Psoas muscle (tissue), 8 donors: ENCODE measurements at regions of chr2 and their contacts with region 1.

Region 1: DNA sequence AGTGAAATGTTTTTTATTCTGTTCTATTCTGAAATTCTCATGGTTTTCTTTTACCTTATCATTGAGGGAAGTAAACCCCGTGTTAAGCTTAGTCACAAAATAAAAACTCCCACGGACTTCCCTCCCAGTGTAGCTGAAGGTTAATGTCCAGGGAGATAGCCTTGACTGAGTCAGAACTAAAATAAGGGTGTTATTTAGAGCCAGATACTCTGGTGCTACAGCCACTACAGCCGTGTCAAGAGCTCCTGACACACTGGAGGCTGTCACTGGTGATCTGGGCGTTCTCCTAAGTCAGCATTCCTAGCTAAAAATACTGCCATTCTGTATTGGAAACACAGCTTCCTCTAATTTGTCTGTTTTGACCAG is 82.0 kb upstream of the RANBP2 start:
- DNase-seq: peak; percentile 41 to 77
- ATAC-seq: peak; percentile 89 to 93 (median 92)
- H3K4me3 ChIP-seq: no peak overlapping the region
- H3K27ac ChIP-seq: peak overlapping the region; percentile 90
- H3K4me1 ChIP-seq: peaks cover 78% of the 10 kb centered on the region
- H3K27me3 ChIP-seq: no peaks in the 10 kb centered on the region
- CTCF ChIP-seq: no peak

Region 2: GRCh38 chr2:108594132-108594981 is 42.9 kb before region 1 on chr2:
- intact Hi-C with region 1: loop called (anchors 5 kb)
- DNase-seq: no peak
- ATAC-seq: peak; percentile 41 to 49 (median 44)
- H3K4me3 ChIP-seq: no peak overlapping the region
- H3K27ac ChIP-seq: peak overlapping the region; percentile 60
- H3K4me1 ChIP-seq: peaks cover 62% of the 10 kb centered on the region
- H3K27me3 ChIP-seq: no peaks in the 10 kb centered on the region
- CTCF ChIP-seq: no peak

Region 3: DNA sequence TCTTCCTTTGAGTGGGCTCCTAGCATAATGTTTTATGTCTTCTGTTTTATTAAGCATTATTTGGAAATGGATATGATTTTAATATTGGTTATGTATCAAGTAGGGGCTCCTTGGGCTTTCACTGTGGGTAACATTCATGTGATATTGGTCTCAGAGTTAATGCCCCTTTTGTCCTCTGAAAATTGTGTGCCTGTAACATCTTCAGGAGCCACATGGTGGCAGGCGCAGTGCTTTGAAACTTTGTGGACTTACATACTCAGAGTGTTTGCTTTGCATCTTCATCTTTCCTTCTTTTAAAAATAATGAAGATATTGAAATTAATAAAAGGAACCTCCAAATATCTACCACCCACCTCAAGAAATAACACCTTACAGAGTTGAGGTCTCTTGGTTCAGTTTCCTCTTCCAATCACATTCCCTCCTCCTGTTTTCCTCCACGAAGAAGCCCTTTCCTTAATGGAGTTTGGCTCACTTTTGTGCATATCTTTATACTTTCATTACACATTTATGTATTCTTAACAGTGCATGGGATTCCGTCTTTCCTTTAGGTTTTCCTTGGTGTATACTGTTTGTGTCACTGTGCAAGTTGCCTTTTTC is 29.5 kb before region 1 on chr2:
- intact Hi-C with region 1: loop called in 1 of 2 experiments (anchors 2 kb)
- DNase-seq: no peak
- ATAC-seq: peak in 2 of 4 donors; percentile 64 to 83
- H3K4me3 ChIP-seq: no peak overlapping the region
- H3K27ac ChIP-seq: no peak overlapping the region
- H3K4me1 ChIP-seq: peaks cover 30% of the 10 kb centered on the region
- H3K27me3 ChIP-seq: no peaks in the 10 kb centered on the region
- CTCF ChIP-seq: peak; percentile 57

Region 4: GRCh38 chr2:108833219-108833618 is 195.9 kb after region 1 on chr2:
- intact Hi-C with region 1: no loop called
- DNase-seq: no peak
- ATAC-seq: no peak
- H3K4me3 ChIP-seq: no peak overlapping the region
- H3K27ac ChIP-seq: no peak overlapping the region
- H3K4me1 ChIP-seq: no peaks in the 10 kb centered on the region
- H3K27me3 ChIP-seq: no peaks in the 10 kb centered on the region
- CTCF ChIP-seq: no peak